ENCODE measurements at regions of chr4 and their contacts with region 1.

Region 1: GRCh38 chr4:86522349-86522748 is 71.8 kb upstream of the PTPN13 start:
- DNase-seq: no peak
- ATAC-seq: peak; percentile 37
- H3K4me3 ChIP-seq: no peak overlapping the region
- H3K27ac ChIP-seq: no peak overlapping the region
- H3K4me1 ChIP-seq: no peaks in the 10 kb centered on the region
- H3K27me3 ChIP-seq: no peaks in the 10 kb centered on the region
- CTCF ChIP-seq: peak in 1 of 3 experiments; percentile 1; a peak in 1 of 6 replicates
- EP300 ChIP-seq: no peak
- POLR2A ChIP-seq: no peak
- RAD21 ChIP-seq: peak; percentile 31; the same call in 1 of the 2 replicates

Region 2: DNA sequence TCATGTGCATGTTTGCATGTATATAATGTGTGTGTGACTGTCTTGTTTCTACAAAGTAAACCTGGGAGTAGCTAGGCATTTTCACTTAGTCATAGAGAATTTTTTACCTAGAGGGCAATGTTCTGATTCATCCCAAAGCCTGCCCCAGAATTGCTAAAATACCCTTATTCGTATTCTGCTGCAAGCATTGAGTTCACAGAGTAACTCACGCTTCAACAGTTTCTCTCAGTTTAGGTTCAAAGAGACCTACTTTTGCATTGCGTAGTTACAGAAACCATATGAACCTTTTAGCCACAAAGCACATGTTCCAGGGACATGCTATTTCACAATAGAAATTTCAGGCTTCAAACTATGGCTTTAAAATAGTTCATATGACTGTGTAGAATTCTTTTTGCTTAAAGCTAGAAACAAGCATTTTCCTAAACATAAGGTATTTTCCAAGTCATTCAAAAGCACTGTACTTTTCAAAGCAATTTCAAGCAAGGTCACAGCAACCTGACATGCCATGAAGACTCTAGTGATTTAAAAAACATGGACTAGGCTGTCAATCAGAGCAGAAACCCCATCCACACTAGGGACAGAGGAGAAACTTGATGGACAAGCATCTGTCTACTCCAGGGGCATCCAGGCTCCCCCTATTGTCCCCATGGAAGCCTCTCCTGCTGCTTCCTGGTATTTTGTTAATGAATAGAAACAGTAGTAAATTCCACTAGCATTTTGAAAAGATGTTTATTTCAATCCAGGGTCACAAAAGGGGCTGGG is 81.0 kb before region 1 on chr4:
- CTCF ChIA-PET with region 1: no interaction called
- POLR2A ChIA-PET with region 1: no interaction called
- RAD21 ChIA-PET with region 1: no interaction called
- SMC1A ChIA-PET with region 1: no interaction called
- in situ Hi-C with region 1: no loop called
- intact Hi-C with region 1: no loop called
- DNase-seq: peak; percentile 16
- ATAC-seq: peak; percentile 96
- H3K4me3 ChIP-seq: no peak overlapping the region
- H3K27ac ChIP-seq: no peak overlapping the region
- H3K4me1 ChIP-seq: no peaks in the 10 kb centered on the region
- H3K27me3 ChIP-seq: no peaks in the 10 kb centered on the region; a peak in 1 of 4 replicates
- CTCF ChIP-seq: no peak
- EP300 ChIP-seq: peak; percentile 30 to 31; a peak in 2 of 4 replicates
- POLR2A ChIP-seq: no peak
- RAD21 ChIP-seq: no peak

Region 3: DNA sequence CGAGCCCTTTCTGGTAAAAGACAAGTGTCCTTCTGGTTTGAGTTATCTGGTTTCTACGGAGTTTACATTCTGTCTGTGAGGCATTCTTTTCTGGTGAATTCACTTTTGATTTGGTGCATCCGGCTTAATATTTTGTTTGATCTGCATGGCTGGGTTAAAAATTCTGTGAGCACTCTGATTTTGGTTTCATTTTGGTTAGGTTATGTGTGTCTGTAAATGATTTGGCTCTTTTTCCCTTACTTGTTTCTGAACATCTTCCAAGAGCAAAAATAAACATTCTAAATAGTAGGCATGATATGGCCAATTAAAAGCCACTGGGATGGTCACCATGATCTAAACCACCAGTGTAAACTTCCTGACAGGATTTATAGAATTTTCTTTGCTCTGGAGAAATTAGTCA is 13.9 kb before region 1 on chr4:
- CTCF ChIA-PET with region 1: interaction called, 16 read pairs
- POLR2A ChIA-PET with region 1: interaction called, 3 read pairs
- RAD21 ChIA-PET with region 1: interaction called, 25 read pairs
- SMC1A ChIA-PET with region 1: interaction called, 24 read pairs
- in situ Hi-C with region 1: no loop called
- intact Hi-C with region 1: no loop called
- DNase-seq: no peak
- ATAC-seq: peak; percentile 67
- H3K4me3 ChIP-seq: no peak overlapping the region
- H3K27ac ChIP-seq: no peak overlapping the region
- H3K4me1 ChIP-seq: no peaks in the 10 kb centered on the region
- H3K27me3 ChIP-seq: peaks cover 0 to 2% of the 10 kb centered on the region in 2 experiments; a peak in 1 of 4 replicates
- CTCF ChIP-seq: no peak
- EP300 ChIP-seq: no peak
- POLR2A ChIP-seq: no peak
- RAD21 ChIP-seq: no peak

Region 4: GRCh38 chr4:86544310-86544966 is 22.1 kb after region 1 on chr4:
- CTCF ChIA-PET with region 1: interaction called, 6 read pairs
- POLR2A ChIA-PET with region 1: interaction called, 8 read pairs
- RAD21 ChIA-PET with region 1: interaction called, 32 read pairs
- SMC1A ChIA-PET with region 1: interaction called, 32 read pairs
- in situ Hi-C with region 1: no loop called
- intact Hi-C with region 1: no loop called
- DNase-seq: no peak
- ATAC-seq: peak; percentile 89
- H3K4me3 ChIP-seq: no peak overlapping the region
- H3K27ac ChIP-seq: peak overlapping the region; percentile 35; the same call in 1 of the 2 replicates
- H3K4me1 ChIP-seq: peaks cover 12% of the 10 kb centered on the region
- H3K27me3 ChIP-seq: no peaks in the 10 kb centered on the region; a peak in 1 of 4 replicates
- CTCF ChIP-seq: no peak
- EP300 ChIP-seq: peak in 1 of 2 experiments; percentile 68; a peak in 1 of 4 replicates
- POLR2A ChIP-seq: no peak
- RAD21 ChIP-seq: no peak

Region 5: GRCh38 chr4:86564795-86565194 is 42.4 kb after region 1 on chr4:
- CTCF ChIA-PET with region 1: interaction called, 29 read pairs
- POLR2A ChIA-PET with region 1: no interaction called
- RAD21 ChIA-PET with region 1: interaction called, 18 read pairs
- SMC1A ChIA-PET with region 1: interaction called, 20 read pairs
- in situ Hi-C with region 1: no loop called
- intact Hi-C with region 1: no loop called
- DNase-seq: no peak
- ATAC-seq: peak; percentile 52
- H3K4me3 ChIP-seq: no peak overlapping the region
- H3K27ac ChIP-seq: no peak overlapping the region
- H3K4me1 ChIP-seq: no peaks in the 10 kb centered on the region; the same call in 1 of the 2 replicates
- H3K27me3 ChIP-seq: no peaks in the 10 kb centered on the region
- CTCF ChIP-seq: peak in 1 of 3 experiments; percentile 50; a peak in 2 of 6 replicates
- EP300 ChIP-seq: no peak
- POLR2A ChIP-seq: no peak
- RAD21 ChIP-seq: peak; percentile 56; the same call in 1 of the 2 replicates

Region 6: DNA sequence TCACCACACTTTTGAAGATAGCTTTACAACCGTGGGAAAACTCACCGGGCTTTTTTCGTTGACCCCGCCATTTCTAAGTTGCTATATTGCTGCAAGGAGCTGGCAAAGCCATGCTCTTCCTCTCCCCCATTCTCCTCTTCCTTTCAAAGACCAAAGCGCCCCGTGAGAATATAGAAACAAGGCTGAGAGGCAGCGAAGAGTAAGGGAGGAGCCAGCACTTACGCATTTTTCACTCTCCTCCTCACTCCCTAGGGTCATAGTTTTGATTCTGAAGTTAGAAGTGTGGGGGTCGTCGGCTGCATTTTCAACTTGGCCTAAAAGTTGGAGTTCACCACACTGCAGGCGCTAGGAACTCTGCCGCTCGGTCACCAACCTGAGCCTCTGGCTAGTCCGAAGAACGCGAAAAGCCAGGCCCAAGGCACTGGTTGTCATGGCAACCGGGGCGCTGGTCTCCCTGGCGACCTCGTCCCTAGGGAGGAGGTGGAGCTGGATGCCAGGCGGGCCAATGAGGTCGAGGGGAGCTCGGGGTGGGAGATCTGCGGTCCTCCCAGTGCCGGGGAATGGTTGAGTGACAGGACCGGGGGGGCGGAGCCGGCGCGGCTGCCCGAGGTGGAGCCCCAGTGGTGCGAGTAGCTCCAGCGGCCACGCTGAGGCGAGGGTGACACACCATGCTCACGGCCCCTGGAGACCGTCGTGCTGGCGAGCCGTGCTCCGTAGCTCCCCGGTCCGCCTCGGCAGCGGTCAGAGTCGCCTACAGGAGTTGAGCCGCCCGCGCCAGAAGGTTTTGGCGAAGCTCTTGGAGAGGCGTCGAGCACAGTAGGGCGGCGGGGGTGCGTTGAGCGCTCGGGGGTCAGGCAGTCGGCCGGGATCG is 71.6 kb after region 1 on chr4 and contains the start of gene PTPN13:
- CTCF ChIA-PET with region 1: interaction called, 33 read pairs
- POLR2A ChIA-PET with region 1: interaction called, 17 read pairs
- RAD21 ChIA-PET with region 1: interaction called, 59 read pairs
- SMC1A ChIA-PET with region 1: interaction called, 139 read pairs
- in situ Hi-C with region 1: no loop called
- intact Hi-C with region 1: loop called (anchors 2 kb)
- DNase-seq: peak; percentile 84
- ATAC-seq: peak; percentile 87
- H3K4me3 ChIP-seq: peak within 1 kb of the TSS; percentile 48
- H3K27ac ChIP-seq: no peak within 1 kb of the TSS
- H3K4me1 ChIP-seq: no peaks in the 10 kb centered on the region
- H3K27me3 ChIP-seq: peaks cover 0 to 5% of the 10 kb centered on the region in 2 experiments; a peak in 1 of 4 replicates
- CTCF ChIP-seq: peak in 2 of 3 experiments; percentile 7 to 39; a peak in 1 of 6 replicates
- EP300 ChIP-seq: no peak
- POLR2A ChIP-seq: peak; percentile 79
- RAD21 ChIP-seq: peak; percentile 21; the same call in 1 of the 2 replicates
- polyA plus RNA-seq, gene PTPN13: 8.5 to 9.3 TPM

Region 7: GRCh38 chr4:86633854-86634253 is 111.5 kb after region 1 on chr4:
- CTCF ChIA-PET with region 1: interaction called, 7 read pairs
- POLR2A ChIA-PET with region 1: interaction called, 3 read pairs
- RAD21 ChIA-PET with region 1: interaction called, 9 read pairs
- SMC1A ChIA-PET with region 1: interaction called, 10 read pairs
- in situ Hi-C with region 1: no loop called
- intact Hi-C with region 1: no loop called
- DNase-seq: no peak
- ATAC-seq: 0 out of 3 replicates have a peak, but pooled peaks have one; percentile 16
- H3K4me3 ChIP-seq: no peak overlapping the region
- H3K27ac ChIP-seq: no peak overlapping the region
- H3K4me1 ChIP-seq: no peaks in the 10 kb centered on the region
- H3K27me3 ChIP-seq: no peaks in the 10 kb centered on the region
- CTCF ChIP-seq: no peak
- EP300 ChIP-seq: no peak
- POLR2A ChIP-seq: no peak
- RAD21 ChIP-seq: no peak

Region 8: DNA sequence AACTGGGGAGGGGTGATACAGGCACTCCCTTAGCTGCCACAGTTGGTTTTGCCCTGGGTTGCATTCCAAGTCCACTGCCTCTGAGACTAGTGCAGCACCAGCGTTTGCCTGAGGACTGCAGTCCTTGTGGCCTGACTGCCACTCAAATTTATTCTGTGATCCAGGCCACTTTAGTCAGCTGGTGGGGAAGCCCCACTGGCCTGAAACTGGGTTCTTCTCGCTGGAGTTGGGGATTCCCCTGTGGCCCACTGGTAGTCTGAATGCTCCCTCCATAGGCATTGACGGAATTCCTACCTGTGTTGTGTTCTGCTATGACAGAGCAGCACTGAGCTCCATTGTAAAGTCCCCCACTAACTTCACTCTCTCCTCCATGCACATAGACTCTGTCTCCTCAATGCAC is 135.6 kb after region 1 on chr4:
- CTCF ChIA-PET with region 1: interaction called, 5 read pairs
- POLR2A ChIA-PET with region 1: no interaction called
- RAD21 ChIA-PET with region 1: interaction called, 11 read pairs
- SMC1A ChIA-PET with region 1: interaction called, 10 read pairs
- in situ Hi-C with region 1: no loop called
- intact Hi-C with region 1: no loop called
- DNase-seq: peak; percentile 11
- ATAC-seq: peak; percentile 92
- H3K4me3 ChIP-seq: no peak overlapping the region
- H3K27ac ChIP-seq: no peak overlapping the region
- H3K4me1 ChIP-seq: peaks cover 3% of the 10 kb centered on the region; the same call in 1 of the 2 replicates
- H3K27me3 ChIP-seq: no peaks in the 10 kb centered on the region
- CTCF ChIP-seq: peak in 1 of 3 experiments; percentile 24; a peak in 1 of 6 replicates
- EP300 ChIP-seq: no peak
- POLR2A ChIP-seq: no peak
- RAD21 ChIP-seq: no peak

Measured in GM12878 (cell line).